Cardiac septum (tissue), 1 donor: ENCODE measurements at regions of chr17 and their contacts with region 1.

Region 1: GRCh38 chr17:4833178-4833940 is at the start of gene MINK1:
- DNase-seq: peak; percentile 95
- total RNA-seq, gene MINK1: 44.0 TPM

Region 2: GRCh38 chr17:4796553-4796921 is 36.8 kb before region 1 on chr17:
- intact Hi-C with region 1: loop called (anchors 2 kb)
- DNase-seq: no peak